Transverse colon (tissue), 4 donors: ENCODE measurements at regions of chr11 and their contacts with region 1.

Region 1: GRCh38 chr11:85941380-85941973 is 86.3 kb downstream of the CCDC83 start:
- DNase-seq: peak; percentile 39
- H3K4me3 ChIP-seq: no peak overlapping the region
- H3K27ac ChIP-seq: no peak overlapping the region
- H3K4me1 ChIP-seq: peaks cover 0 to 2% (median 0%) of the 10 kb centered on the region in 4 donors
- H3K27me3 ChIP-seq: no peaks in the 10 kb centered on the region
- CTCF ChIP-seq: peak; percentile 5 to 63 (median 52)
- EP300 ChIP-seq: no peak
- POLR2A ChIP-seq: no peak

Region 2: DNA sequence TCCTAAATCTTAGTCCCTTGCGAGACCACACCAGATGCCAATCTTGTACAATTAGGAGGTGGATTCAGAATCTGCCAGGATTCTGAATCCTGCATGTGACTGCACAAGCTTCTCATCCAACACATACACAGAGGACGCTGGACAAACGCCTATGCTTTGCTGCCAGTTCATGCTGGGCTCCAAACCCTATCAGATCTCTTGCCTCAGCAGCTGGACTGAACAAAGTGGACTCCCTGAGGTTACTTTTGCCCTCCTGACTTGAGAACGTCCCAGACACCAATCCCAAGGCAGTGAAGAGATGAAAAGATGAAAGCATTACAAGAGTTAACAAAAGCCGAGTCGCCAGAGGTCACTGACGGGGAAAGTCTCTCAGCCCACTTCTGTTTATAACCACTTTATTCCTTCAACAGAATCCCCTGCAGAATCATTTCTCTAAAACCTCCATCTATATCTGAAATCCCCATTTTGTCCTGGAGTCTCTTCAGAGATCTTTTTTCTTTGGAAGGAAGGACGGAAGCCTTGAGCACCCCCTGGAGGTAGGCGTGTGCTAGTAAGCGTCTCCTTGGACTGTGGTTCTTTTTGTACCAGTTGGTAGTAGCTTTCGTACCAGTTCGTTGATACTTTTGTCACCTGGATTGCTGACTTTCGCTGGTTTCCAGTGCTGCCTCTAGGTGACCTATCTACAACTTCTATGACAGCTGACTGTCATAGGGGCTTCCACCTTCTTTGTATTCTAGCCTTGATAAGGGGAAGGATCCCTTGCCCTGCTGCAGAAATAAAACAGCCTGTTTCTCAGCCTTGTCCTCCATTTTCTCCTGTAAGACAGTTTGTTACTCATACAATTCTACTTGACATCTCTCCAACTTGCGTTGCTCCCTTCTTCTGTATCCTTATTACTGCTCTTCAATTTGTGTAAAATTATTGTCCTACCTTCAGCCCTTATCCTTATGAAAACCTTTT is 276.9 kb after region 1 on chr11:
- in situ Hi-C with region 1: loop called in 3 of 4 experiments (anchors 10 to 25 kb)
- intact Hi-C with region 1: loop called (anchors 2 kb)
- DNase-seq: peak; percentile 75
- H3K4me3 ChIP-seq: peak overlapping the region in 1 of 4 donors; percentile 10
- H3K27ac ChIP-seq: no peak overlapping the region
- H3K4me1 ChIP-seq: peaks cover 0 to 11% (median 5%) of the 10 kb centered on the region in 4 donors
- H3K27me3 ChIP-seq: no peaks in the 10 kb centered on the region
- CTCF ChIP-seq: peak; percentile 79 to 89 (median 82)
- EP300 ChIP-seq: no peak
- POLR2A ChIP-seq: no peak